ENCODE measurements at regions of chr3 and their contacts with region 1.

Region 1: GRCh38 chr3:42539869-42540714 is 37.6 kb downstream of the VIPR1 start:
- DNase-seq: peak in 2 of 5 donors; percentile 51 to 56
- ATAC-seq: peak in 3 of 4 donors; percentile 26 to 50 (median 31)
- H3K4me3 ChIP-seq: no peak overlapping the region
- H3K27ac ChIP-seq: no peak overlapping the region
- H3K4me1 ChIP-seq: peaks cover 0 to 28% (median 12%) of the 10 kb centered on the region in 12 donors
- H3K27me3 ChIP-seq: no peaks in the 10 kb centered on the region
- CTCF ChIP-seq: peak; percentile 57 to 77 (median 68)
- POLR2A ChIP-seq: no peak

Region 2: DNA sequence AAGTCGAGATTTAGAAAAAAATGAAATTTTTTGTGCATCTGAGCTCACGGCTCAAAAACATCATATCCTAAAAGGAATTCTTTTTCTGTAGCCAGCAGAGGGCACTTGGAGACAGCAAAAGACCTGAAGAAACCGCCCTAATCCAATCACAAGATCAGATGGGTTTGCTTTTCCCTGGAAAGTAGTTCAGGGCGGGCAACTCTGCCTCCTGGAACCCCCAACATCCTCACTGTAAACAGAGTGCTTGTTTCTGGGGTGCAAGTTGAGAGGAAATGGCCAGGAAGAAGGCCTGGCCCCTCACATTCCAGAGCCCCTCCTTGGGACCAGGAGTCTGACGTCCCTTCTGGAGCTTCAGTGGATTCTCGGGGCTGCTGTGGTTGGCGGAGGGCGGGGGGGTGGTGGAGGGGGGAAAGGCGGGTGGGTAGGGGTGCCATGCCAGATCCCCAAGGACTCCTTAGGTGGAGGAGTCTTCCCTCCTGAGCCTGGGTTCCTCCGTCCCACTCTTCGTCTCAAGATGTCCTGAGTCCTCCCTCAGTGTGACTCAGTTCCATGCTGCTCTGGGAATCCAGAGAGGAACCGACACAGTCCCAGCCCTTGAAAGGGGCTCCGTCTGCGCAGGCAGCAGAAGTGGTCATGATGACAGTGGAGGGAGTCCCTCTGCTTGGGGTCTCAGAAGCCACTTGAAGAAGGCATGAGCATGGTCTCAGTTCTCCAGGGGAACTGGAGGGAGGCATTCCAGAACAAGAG is 310.0 kb before region 1 on chr3:
- intact Hi-C with region 1: loop called in 7 of 10 experiments (anchors 5 to 10 kb)
- DNase-seq: no peak
- ATAC-seq: peak in 2 of 4 donors; percentile 12 to 42
- H3K4me3 ChIP-seq: peak overlapping the region in 1 of 12 donors; percentile 29
- H3K27ac ChIP-seq: no peak overlapping the region
- H3K4me1 ChIP-seq: peaks cover 0 to 8% (median 0%) of the 10 kb centered on the region in 12 donors
- H3K27me3 ChIP-seq: peaks cover 0 to 4% (median 0%) of the 10 kb centered on the region in 9 donors
- CTCF ChIP-seq: peak in 10 of 12 donors; percentile 28 to 66 (median 54)
- POLR2A ChIP-seq: no peak

Region 3: DNA sequence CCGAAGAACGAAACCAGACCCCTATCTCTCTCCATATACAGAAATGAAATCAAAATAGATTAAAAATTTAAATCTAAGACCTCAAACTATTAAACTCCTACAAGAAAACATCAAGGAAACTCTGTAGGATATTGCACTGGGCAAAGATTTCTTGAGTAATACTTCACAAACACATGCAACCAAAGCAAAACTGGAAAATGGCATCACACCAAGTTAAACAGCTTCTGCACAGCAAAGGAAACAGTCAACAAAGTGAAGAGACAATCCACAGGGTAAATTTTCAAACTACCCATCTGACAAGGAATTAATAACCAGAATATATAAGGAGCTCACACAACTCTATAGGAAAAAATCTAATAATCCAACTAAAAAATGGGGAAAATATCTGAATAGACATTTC is 303.5 kb before region 1 on chr3:
- intact Hi-C with region 1: loop called in 5 of 10 experiments (anchors 5 to 10 kb)
- DNase-seq: no peak
- ATAC-seq: no peak
- H3K4me3 ChIP-seq: no peak overlapping the region
- H3K27ac ChIP-seq: no peak overlapping the region
- H3K4me1 ChIP-seq: no peaks in the 10 kb centered on the region
- H3K27me3 ChIP-seq: peaks cover 0 to 4% (median 0%) of the 10 kb centered on the region in 9 donors
- CTCF ChIP-seq: no peak
- POLR2A ChIP-seq: no peak

Region 4: GRCh38 chr3:42247576-42248027 is 292.5 kb before region 1 on chr3:
- intact Hi-C with region 1: loop called in 9 of 10 experiments (anchors 2 to 5 kb)
- DNase-seq: peak in 1 of 5 donors; percentile 41
- ATAC-seq: peak in 3 of 4 donors; percentile 45 to 58 (median 47)
- H3K4me3 ChIP-seq: no peak overlapping the region
- H3K27ac ChIP-seq: no peak overlapping the region
- H3K4me1 ChIP-seq: no peaks in the 10 kb centered on the region
- H3K27me3 ChIP-seq: peaks cover 0 to 8% (median 3%) of the 10 kb centered on the region in 9 donors
- CTCF ChIP-seq: peak; percentile 62 to 81 (median 70)
- POLR2A ChIP-seq: no peak

Region 5: GRCh38 chr3:42314411-42314810 is 225.7 kb before region 1 on chr3:
- intact Hi-C with region 1: no loop called
- DNase-seq: no peak
- ATAC-seq: no peak
- H3K4me3 ChIP-seq: no peak overlapping the region
- H3K27ac ChIP-seq: no peak overlapping the region
- H3K4me1 ChIP-seq: no peaks in the 10 kb centered on the region
- H3K27me3 ChIP-seq: no peaks in the 10 kb centered on the region
- CTCF ChIP-seq: no peak
- POLR2A ChIP-seq: no peak

Region 6: DNA sequence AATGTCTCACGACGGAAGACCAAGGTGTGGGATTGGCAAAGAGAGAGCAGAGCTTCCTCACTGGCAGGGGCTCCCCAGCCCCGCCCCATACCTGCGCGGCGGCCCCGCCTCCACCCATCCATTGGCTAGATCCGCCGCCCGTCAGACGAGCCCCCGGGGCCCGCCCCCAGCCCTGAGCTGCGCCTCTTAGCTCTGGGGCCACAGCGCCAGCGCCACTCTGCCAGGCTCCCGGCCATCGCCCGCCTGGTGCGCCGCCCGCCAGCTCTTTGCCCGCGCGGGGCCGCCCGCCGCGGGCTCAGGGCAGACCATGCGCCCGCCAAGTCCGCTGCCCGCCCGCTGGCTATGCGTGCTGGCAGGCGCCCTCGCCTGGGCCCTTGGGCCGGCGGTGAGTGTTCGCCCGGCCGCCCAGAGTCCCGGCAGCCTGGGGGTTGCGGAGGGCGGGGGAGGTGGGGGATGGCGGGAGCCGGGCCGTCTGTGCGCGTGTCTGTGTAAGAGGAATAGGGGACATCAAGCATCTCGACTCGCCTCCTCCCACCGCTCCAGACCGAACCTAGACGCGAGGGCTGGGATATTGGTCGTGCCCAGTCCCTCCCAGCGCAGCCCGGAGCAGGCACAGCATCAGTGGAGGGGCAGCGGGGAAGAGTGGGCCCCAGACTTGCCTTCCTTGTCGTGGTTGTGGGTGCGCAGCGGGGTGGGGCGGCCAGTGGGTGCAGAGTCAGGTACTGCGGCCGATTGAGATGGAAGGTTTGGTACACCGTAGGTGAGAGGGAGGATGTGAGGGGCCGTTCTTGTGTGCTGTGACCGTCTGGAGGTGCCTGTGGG is 37.5 kb before region 1 on chr3 and contains the start of gene VIPR1:
- intact Hi-C with region 1: loop called in 9 of 10 experiments (anchors 2 to 5 kb)
- DNase-seq: peak; percentile 65 to 92 (median 81)
- ATAC-seq: peak; percentile 87 to 93 (median 91)
- H3K4me3 ChIP-seq: peak within 1 kb of the TSS; percentile 13 to 63 (median 48)
- H3K27ac ChIP-seq: peak within 1 kb of the TSS in 5 of 12 donors; percentile 8 to 66 (median 43)
- H3K4me1 ChIP-seq: peaks cover 0 to 28% (median 12%) of the 10 kb centered on the region in 12 donors
- H3K27me3 ChIP-seq: peaks cover 0 to 34% (median 8%) of the 10 kb centered on the region in 9 donors
- CTCF ChIP-seq: no peak
- POLR2A ChIP-seq: no peak
- total RNA-seq, gene VIPR1: 0.96 to 5.4 (median 1.7) TPM